Mammary epithelial cell (primary cell): ENCODE measurements at regions of chr6 and their contacts with region 1.

Region 1: DNA sequence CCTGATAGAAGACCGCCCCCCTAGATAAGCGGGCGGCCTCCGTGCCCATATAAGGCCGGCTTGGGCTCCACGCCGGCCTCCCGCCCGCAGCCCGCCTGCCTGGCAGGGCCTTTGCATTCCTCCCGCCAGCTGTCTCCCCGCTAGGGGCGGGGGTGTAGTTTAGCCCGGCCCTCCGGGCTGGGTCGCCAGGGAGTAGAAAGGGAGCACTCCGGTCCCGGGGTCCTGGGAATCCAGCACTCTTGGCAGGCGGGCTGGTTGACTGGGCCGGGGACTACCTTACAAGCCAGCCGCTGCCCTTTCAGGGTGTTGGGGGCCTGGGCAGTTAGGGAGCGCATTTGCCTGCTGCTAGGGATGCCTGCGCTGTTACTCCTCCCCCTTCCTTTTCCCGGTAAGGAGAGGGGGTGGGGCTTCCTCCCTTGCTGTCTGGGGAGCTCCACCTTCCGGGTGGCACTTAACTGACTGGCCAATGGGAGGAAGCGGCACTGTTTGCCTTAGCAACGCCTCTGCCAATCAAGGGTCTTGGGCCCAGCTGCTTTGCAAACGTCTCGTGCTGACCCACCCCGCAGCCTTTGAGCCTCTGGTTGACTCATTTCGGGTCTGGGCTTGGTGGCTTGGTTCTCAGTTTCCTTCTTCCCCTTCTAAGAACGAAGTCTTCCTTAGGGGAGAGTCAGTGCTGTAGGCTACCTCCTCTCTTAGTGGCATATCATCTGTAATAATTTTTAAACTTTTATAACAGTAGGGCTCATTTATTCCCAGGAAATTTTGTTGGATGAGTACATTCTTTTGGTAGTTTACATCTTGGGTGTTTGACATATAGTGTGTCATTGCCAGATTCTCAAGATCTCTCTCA is 3.4 kb downstream of the SRF start:
- DNase-seq: peak; percentile 98
- H3K4me3 ChIP-seq: peak overlapping the region in 2 of 3 experiments; percentile 69 to 73
- H3K27ac ChIP-seq: peak overlapping the region; percentile 89
- H3K4me1 ChIP-seq: peaks cover 24% of the 10 kb centered on the region
- H3K27me3 ChIP-seq: no peaks in the 10 kb centered on the region
- CTCF ChIP-seq: peak in 1 of 2 donors; percentile 19

Region 2: DNA sequence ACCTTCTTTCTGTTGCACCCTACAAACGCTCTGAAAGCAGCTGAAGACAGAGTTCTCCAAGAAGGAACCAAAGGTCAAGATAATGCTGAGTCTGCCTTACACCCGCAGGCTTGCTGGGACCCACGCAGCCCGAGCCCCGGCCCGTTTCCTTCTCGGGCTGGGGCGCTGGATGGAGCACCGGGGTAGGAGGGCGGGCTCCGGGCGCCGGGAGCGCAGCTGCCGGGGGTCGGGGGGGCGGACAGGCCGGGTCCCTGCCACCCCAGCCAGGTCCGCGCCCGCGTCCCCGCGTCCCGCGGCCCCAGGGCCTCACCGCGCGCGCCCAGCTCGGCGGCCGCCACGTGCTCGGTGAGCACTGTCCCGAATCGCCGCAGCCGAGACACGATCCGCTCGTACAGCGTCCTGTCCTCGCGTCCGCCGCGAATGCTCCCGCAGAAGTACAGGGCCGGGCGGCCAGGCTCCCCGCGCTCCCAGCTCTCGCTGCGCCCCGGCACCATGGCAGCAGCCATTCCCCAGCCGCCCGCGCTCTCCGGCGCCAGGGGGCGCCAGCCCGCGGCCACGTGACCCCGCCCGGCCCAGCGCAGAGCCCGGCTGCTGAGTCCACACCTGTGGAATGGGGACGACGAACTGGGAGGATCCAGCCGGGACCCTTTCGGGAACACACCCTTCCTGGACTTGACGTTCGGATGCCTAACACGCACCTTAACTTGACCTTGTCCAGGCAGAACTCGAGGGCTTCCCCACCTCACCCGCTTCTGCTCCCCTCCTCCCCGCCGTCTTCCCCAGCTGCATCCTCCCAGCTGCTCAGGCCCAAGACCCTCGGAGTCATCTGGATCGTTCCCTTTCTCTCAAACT is 54.7 kb after region 1 on chr6 and contains the start of gene DNPH1:
- CTCF ChIA-PET with region 1: no interaction called
- dilution Hi-C with region 1: no loop called
- in situ Hi-C with region 1: no loop called
- intact Hi-C with region 1: loop called (anchors 5 kb)
- DNase-seq: peak; percentile 61
- H3K4me3 ChIP-seq: peak within 1 kb of the TSS; percentile 49 to 67 (median 66)
- H3K27ac ChIP-seq: peak within 1 kb of the TSS; percentile 16
- H3K4me1 ChIP-seq: peaks cover 5% of the 10 kb centered on the region
- H3K27me3 ChIP-seq: no peaks in the 10 kb centered on the region
- CTCF ChIP-seq: peak; percentile 51 to 74
- total RNA-seq, gene DNPH1: 55.2 to 56.9 TPM

Region 3: DNA sequence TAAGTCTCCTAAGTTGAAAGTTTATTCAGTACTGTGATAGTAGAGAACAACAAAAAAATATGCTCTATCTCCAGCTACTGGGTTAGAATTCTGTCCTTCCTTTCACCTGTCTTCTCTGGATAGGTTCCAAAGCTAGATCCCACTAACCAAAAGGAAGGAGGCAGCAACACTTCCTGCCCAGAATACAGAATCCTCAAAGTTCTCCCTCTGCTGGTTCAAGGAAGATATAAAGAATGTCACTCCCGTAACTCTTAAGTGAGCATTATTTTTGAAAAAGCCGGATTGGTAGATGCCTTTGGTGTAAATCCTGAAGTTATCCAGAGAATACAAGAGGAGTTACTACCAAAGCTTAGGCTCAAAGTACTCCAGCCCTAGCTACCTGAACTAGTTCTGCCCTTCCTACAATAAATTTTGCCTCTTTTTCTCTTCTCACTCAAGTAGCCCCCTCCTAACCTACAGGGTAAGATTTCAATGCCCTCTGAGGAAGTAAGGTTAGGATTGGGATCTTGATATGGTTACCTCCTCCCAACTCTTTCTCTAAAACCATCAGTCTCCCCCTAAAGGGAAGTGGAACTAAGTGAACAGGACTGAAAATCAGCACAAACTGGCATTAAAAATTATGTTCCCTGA is 160.1 kb after region 1 on chr6:
- CTCF ChIA-PET with region 1: no interaction called
- dilution Hi-C with region 1: no loop called
- in situ Hi-C with region 1: no loop called
- intact Hi-C with region 1: loop called (anchors 5 kb)
- DNase-seq: peak; percentile 47
- H3K4me3 ChIP-seq: no peak overlapping the region
- H3K27ac ChIP-seq: no peak overlapping the region
- H3K4me1 ChIP-seq: no peaks in the 10 kb centered on the region
- H3K27me3 ChIP-seq: no peaks in the 10 kb centered on the region
- CTCF ChIP-seq: peak; percentile 58 to 67